OCI-LY7 (cell line): ENCODE measurements at regions of chr9 and their contacts with region 1.

Region 1: GRCh38 chr9:81999806-82000205 is 11.2 kb downstream of the SPATA31D1 start:
- DNase-seq: no peak
- H3K4me3 ChIP-seq: no peak overlapping the region
- H3K27ac ChIP-seq: no peak overlapping the region
- H3K4me1 ChIP-seq: no peaks in the 10 kb centered on the region
- CTCF ChIP-seq: no peak

Region 2: GRCh38 chr9:81826517-81826906 is 173.3 kb before region 1 on chr9:
- CTCF ChIA-PET with region 1: no interaction called
- POLR2A ChIA-PET with region 1: no interaction called
- intact Hi-C with region 1: no loop called
- DNase-seq: no peak
- H3K4me3 ChIP-seq: no peak overlapping the region
- H3K27ac ChIP-seq: no peak overlapping the region
- H3K4me1 ChIP-seq: peaks cover 21% of the 10 kb centered on the region
- CTCF ChIP-seq: no peak

Region 3: DNA sequence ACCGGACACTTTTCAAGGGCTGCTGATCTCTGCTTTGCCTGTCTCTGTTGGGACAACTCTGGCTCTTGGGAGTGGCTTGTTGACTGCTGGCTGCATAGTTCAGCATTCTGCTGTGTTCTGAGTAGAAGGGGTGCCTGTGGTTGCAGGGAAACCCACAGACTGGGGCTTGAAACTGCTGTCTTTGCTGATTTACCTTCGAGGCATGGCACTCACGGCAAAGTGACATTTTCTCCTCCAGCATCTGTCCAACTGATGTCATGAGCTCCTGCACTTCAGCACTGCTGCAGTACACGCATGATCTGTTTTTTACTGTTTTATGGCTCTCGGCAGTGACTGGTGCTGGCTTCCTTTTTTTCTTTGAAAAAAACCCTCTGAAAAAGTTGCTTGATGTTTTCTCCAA is 58.0 kb after region 1 on chr9:
- CTCF ChIA-PET with region 1: no interaction called
- POLR2A ChIA-PET with region 1: no interaction called
- intact Hi-C with region 1: loop called (anchors 1 kb)
- DNase-seq: peak; percentile 27
- H3K4me3 ChIP-seq: no peak overlapping the region
- H3K27ac ChIP-seq: no peak overlapping the region
- H3K4me1 ChIP-seq: no peaks in the 10 kb centered on the region
- CTCF ChIP-seq: no peak